ENCODE measurements at regions of chr13 and their contacts with region 1.

Region 1: GRCh38 chr13:75319254-75319653 is 162.7 kb downstream of the TBC1D4 start:
- DNase-seq: no peak
- H3K4me3 Mint-ChIP-seq: peak overlapping the region; percentile 9
- H3K27ac Mint-ChIP-seq: peak overlapping the region; percentile 99
- H3K4me1 Mint-ChIP-seq: peaks cover 68% of the 10 kb centered on the region
- H3K27me3 Mint-ChIP-seq: no peaks in the 10 kb centered on the region

Region 2: DNA sequence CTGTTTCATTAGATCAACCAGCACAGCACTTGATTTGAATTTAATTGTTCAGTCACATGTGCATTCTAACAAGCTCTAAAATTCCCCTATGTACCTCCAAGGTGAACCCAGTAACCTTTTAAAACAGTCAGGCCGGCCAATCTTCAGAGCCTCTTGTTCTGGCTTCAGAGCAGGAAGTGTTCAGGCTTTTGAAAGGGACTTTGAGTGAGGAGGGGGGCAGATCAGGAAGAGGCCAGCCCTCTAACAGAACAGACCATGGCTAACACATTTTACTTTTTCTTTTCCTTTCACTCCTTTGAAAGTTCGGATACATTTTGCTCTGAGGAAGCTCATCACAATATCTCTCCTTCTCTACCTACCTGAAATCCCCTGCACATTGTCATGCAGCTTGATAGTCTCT is 227.5 kb before region 1 on chr13:
- intact Hi-C with region 1: no loop called
- DNase-seq: no peak
- H3K4me3 Mint-ChIP-seq: no peak overlapping the region
- H3K27ac Mint-ChIP-seq: no peak overlapping the region
- H3K4me1 Mint-ChIP-seq: no peaks in the 10 kb centered on the region
- H3K27me3 Mint-ChIP-seq: peaks cover 3% of the 10 kb centered on the region

Region 3: GRCh38 chr13:75299913-75300862 is 19.1 kb before region 1 on chr13:
- intact Hi-C with region 1: loop called (anchors 1 kb)
- DNase-seq: no peak
- H3K4me3 Mint-ChIP-seq: peak overlapping the region; percentile 47
- H3K27ac Mint-ChIP-seq: peak overlapping the region; percentile 79
- H3K4me1 Mint-ChIP-seq: peaks cover 47% of the 10 kb centered on the region
- H3K27me3 Mint-ChIP-seq: no peaks in the 10 kb centered on the region

Region 4: DNA sequence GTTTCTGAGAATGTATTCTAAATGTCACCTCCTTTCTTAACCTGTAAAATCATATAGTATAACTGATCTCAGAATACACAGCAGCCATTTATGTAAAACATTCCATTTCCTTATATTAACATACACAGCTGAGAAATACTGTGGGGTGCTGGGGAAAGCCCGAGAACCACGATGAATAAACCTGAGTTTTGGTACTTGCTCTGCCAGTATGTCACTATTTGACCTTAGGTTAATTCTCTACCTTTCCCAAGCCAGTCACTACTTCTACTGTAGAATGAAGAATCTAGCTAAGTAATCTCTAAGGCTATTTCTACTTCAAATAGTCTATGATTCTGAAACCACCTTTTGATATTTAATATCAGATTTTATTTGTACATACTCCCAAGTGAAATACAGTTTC is 11.0 kb before region 1 on chr13:
- intact Hi-C with region 1: loop called (anchors 1 kb)
- DNase-seq: no peak
- H3K4me3 Mint-ChIP-seq: peak overlapping the region; percentile 19
- H3K27ac Mint-ChIP-seq: peak overlapping the region; percentile 69
- H3K4me1 Mint-ChIP-seq: peaks cover 63% of the 10 kb centered on the region
- H3K27me3 Mint-ChIP-seq: no peaks in the 10 kb centered on the region

Region 5: GRCh38 chr13:75482070-75482819 is 163.0 kb after region 1 on chr13 and contains the start of gene TBC1D4:
- intact Hi-C with region 1: loop called (anchors 1 kb)
- DNase-seq: peak; percentile 40
- H3K4me3 Mint-ChIP-seq: peak within 1 kb of the TSS; percentile 99
- H3K27ac Mint-ChIP-seq: peak within 1 kb of the TSS; percentile 89
- H3K4me1 Mint-ChIP-seq: peaks cover 45% of the 10 kb centered on the region
- H3K27me3 Mint-ChIP-seq: peaks cover 49% of the 10 kb centered on the region
- total RNA-seq, gene TBC1D4: 66.6 and 73.5 TPM in 2 replicates

Measured in activated T-helper 1 cell treated with anti-CD3 and anti-CD28 coated beads, Interleukin-12 subunit alpha, Interleukin-12 subunit beta, Interleukin-2, Interleukin-4 antibody, amounts not matched to agents 30 ng/mL and 10 ng/mL and 1 ng/mL, durations not matched to agents 14 hours and 24 hours and 36 hours (primary cell).